OCI-LY7 (cell line): ENCODE measurements at regions of chr21 and their contacts with region 1.

Region 1: GRCh38 chr21:35204850-35205541 is 155.9 kb upstream of the RUNX1 start:
- DNase-seq: peak; percentile 54
- H3K4me3 ChIP-seq: peak overlapping the region; percentile 36
- H3K27ac ChIP-seq: peak overlapping the region; percentile 76
- H3K4me1 ChIP-seq: peaks cover 37% of the 10 kb centered on the region
- CTCF ChIP-seq: peak; percentile 57

Region 2: GRCh38 chr21:35189077-35189863 is 15.7 kb before region 1 on chr21:
- CTCF ChIA-PET with region 1: interaction called, 8 read pairs
- POLR2A ChIA-PET with region 1: interaction called, 20 read pairs
- intact Hi-C with region 1: no loop called
- DNase-seq: peak; percentile 91
- H3K4me3 ChIP-seq: peak overlapping the region; percentile 59
- H3K27ac ChIP-seq: peak overlapping the region; percentile 71
- H3K4me1 ChIP-seq: peaks cover 35% of the 10 kb centered on the region
- CTCF ChIP-seq: no peak

Region 3: DNA sequence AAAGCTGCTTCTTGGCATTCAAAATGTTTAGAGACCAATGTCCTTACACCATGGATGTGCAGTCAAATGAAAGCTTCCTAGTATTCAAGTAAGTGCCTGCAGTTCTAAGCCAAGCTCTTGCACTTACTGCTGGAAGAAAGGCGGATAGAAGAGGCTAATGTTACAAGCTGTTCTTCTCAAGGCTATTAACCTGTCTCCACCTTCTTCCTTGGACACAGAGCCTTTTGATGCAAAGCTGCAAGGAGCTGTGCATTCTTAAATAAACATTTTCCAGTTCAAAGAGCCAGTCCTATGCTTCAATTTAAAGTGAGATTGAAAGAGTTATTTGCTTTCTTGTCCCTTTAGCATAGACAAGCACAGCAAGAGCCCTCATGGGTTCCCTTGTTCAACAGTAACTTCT is 12.0 kb after region 1 on chr21:
- CTCF ChIA-PET with region 1: no interaction called
- POLR2A ChIA-PET with region 1: interaction called, 10 read pairs
- intact Hi-C with region 1: no loop called
- DNase-seq: no peak
- H3K4me3 ChIP-seq: no peak overlapping the region
- H3K27ac ChIP-seq: no peak overlapping the region
- H3K4me1 ChIP-seq: peaks cover 28% of the 10 kb centered on the region
- CTCF ChIP-seq: no peak

Region 4: DNA sequence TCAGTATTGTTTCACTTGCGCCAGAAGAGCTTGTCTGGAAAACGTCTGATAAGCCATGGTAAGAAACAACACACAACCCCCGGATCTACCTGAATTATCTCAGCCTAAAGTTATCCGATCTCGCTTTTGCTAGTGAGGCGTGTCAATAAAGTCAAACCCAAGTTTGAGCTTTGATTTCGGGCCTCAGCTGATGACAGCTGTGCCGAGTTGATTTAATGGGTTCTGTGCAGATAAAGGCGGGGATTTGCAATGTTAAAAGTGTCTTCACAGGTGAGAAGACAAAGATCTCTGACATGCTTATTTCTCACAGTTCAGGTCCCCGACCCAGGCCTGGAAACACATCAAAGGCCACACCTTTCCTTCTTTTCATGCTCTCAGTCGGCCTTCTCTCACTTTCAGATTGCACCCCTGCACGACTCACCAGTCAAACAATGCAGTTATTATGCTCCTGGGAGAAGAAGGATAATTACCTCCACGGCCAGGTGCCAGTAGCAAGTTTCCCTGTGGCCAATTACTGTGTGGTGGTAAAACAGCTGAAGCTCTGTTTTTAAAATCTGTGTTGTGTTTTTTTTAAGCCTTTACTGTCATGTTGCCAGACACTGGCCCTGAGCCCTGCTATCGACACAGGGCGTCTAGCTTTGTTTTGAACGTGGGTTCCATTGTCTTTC is 89.4 kb after region 1 on chr21:
- CTCF ChIA-PET with region 1: no interaction called
- POLR2A ChIA-PET with region 1: no interaction called
- intact Hi-C with region 1: no loop called
- DNase-seq: no peak
- H3K4me3 ChIP-seq: no peak overlapping the region
- H3K27ac ChIP-seq: no peak overlapping the region
- H3K4me1 ChIP-seq: no peaks in the 10 kb centered on the region
- CTCF ChIP-seq: no peak